RWPE1 (cell line): ENCODE measurements at regions of chr2 and their contacts with region 1.

Region 1: GRCh38 chr2:86747711-86748639 is 27.9 kb downstream of the RMND5A start:
- DNase-seq: peak; percentile 41
- H3K27ac ChIP-seq: no peak overlapping the region
- CTCF ChIP-seq: no peak

Region 2: DNA sequence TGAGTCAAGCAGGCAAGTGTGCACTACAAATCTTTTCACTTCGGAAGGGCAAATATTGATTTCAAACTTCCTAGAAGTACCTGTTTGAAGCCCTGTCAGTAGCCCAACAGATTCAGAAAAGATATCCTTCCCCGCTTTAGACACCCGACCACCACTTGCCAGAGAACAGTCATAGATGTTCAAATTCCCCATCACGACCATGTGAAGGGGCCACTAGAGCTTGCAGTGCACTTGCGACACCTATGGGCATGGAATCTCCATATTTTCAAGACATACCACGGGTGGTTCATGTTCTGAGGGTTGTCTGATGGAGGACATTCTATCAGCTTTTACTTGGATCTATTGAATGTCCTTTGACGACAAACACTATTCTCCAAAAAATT is 1030.0 kb before region 1 on chr2:
- CTCF ChIA-PET with region 1: no interaction called
- POLR2A ChIA-PET with region 1: no interaction called
- DNase-seq: no peak
- H3K27ac ChIP-seq: no peak overlapping the region
- CTCF ChIP-seq: no peak

Region 3: DNA sequence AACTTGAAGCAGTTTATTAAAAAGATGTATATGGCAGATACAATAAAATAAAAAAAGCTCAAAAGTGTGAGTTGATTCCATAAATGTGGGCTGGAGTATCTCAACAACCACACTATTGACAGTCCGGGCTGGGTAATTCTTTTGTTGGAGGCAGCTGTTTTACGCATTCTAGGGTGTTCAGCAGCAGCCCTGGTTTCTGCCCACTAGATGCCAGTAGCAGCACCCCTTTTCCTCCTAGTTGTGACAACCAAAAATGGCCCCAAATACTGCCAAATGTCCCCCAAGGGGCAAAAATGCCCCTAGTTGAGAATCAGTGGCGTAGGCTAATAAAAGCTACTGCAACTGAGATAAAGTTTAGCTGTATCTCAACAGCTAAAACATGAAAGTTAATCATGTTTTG is 229.5 kb before region 1 on chr2:
- CTCF ChIA-PET with region 1: interaction called, 10 read pairs
- POLR2A ChIA-PET with region 1: no interaction called
- DNase-seq: no peak
- H3K27ac ChIP-seq: no peak overlapping the region
- CTCF ChIP-seq: peak; percentile 50